HEK293 (cell line): ENCODE measurements at regions of chr6 and their contacts with region 1.

Region 1: DNA sequence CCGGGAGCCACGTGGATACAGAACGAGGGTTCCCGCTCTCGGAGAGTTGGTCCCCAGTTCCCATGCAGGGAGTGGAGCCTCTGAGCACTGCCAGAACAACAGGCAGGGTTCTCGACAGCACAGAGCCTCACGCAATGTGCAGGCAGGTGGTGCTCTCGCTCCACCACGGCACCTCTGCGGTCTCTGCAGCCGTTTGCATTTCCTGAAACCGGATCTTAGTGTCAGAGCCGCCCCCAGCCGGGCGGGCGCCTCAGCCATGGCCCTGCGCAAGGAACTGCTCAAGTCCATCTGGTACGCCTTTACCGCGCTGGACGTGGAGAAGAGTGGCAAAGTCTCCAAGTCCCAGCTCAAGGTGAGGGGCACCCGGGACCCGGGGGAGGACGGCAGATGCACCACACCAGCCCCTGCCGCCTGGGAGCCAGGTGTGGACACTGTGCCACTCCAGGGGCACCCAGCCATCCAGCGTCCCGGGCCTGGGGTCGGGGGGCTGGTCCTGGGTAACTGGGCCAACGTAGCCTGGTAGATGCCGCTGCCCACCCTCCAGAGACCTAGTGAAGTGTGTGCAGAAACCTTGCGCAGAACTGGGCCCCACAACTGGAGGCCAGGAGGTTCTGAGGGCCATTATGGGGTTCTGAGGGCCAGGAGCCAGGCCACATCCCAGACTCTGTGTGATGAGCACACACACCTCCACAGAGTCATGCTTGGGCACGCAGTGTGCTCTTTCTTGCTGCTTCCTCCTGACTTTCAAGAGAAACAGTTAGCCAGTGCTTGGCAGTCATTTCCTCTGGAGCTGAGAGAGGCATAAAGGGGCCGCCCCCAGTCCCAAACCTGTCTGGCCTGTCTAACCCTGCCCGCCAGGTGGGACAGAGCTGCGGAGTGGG is at the start of gene DEF6:
- H3K4me3 ChIP-seq: no peak within 1 kb of the TSS
- H3K27ac ChIP-seq: no peak within 1 kb of the TSS
- H3K4me1 ChIP-seq: no peaks in the 10 kb centered on the region
- CTCF ChIP-seq: 0 out of 2 replicates have a peak, but pooled peaks have one; percentile 45

Region 2: GRCh38 chr6:34979218-34979617 is 318.6 kb before region 1 on chr6:
- CTCF ChIA-PET with region 1: no interaction called
- POLR2A ChIA-PET with region 1: no interaction called
- H3K4me3 ChIP-seq: no peak overlapping the region
- H3K27ac ChIP-seq: no peak overlapping the region
- H3K4me1 ChIP-seq: no peaks in the 10 kb centered on the region
- CTCF ChIP-seq: no peak

Region 3: DNA sequence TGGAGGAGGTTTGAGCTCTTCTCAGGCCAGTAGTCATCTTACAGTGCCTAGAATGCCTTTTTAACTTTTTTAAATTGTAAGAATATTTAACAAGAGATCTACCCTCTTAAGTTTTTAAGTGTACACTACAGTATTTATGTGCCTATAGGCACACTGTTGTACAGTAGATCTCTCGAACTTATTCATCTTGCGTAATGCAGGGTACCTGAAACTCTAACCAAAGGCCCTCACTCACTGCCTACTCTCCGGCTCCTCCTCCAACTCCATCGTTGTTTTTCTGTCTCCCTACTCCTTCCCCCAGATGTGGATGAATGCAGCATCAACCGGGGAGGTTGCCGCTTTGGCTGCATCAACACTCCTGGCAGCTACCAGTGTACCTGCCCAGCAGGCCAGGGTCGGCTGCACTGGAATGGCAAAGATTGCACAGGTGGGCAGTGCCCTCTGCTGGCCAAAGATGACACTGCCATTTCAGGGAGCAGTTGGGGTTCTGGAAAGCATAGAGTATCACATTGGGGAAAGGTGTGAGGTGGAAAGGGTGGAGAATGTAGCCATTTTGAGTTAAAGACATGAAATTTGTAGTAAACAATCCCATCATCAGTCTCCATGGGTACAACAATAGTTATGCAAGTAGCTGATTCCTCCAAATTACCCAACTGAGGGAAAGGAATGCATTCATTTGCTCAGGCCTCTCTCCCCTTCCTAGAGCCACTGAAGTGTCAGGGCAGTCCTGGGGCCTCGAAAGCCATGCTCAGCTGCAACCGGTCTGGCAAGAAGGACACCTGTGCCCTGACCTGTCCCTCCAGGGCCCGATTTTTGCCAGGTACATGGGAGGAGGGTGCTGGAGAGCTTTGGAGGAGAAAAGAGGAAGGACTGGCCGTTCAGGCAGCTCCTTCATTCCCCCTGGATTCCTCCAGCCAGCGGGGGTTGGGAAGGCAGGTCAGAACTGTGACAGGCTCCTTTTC is 56.7 kb before region 1 on chr6:
- CTCF ChIA-PET with region 1: no interaction called
- POLR2A ChIA-PET with region 1: no interaction called
- H3K4me3 ChIP-seq: no peak overlapping the region
- H3K27ac ChIP-seq: no peak overlapping the region
- H3K4me1 ChIP-seq: no peaks in the 10 kb centered on the region
- CTCF ChIP-seq: peak; percentile 96

Region 4: DNA sequence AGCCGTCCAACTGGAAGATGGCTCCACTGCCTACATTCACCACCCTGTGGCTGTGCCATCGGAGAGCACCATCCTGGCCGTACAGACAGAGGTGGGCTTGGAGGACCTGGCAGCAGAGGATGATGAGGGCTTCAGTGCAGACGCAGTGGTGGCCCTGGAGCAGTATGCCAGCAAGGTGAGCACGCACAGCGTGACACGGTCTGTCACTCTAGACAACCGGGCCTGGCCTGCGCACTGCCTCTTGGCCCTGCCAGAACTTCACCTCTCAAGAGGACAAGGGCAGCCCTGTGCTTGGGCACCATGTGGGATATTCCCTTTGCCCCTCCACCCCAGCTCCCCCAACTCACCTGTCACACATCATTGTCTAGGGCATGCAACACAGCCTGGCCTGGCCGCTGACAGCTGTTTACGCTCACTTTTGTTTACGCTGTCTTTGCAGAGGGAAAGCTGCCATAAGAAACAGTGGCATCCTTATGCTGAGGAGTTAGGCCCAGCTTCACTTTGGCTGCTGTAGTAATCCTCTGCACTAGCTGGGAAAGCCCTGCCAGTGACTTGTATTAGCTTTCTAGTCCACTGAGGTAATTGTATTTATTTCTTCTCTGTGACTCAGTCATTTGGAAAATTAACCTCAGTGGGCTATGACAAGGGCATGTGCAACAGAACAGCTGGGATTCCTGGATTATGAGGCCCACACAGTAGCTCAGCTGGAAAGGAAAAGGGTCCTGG is 10.0 kb before region 1 on chr6:
- CTCF ChIA-PET with region 1: interaction called, 32 read pairs
- POLR2A ChIA-PET with region 1: no interaction called
- H3K4me3 ChIP-seq: no peak overlapping the region
- H3K27ac ChIP-seq: no peak overlapping the region
- H3K4me1 ChIP-seq: no peaks in the 10 kb centered on the region
- CTCF ChIP-seq: no peak

Region 5: GRCh38 chr6:35669451-35670045 is 371.7 kb after region 1 on chr6:
- CTCF ChIA-PET with region 1: no interaction called
- POLR2A ChIA-PET with region 1: no interaction called
- H3K4me3 ChIP-seq: no peak overlapping the region
- H3K27ac ChIP-seq: no peak overlapping the region
- H3K4me1 ChIP-seq: peaks cover 5% of the 10 kb centered on the region; the same call in 1 of the 2 replicates
- CTCF ChIP-seq: no peak